ENCODE measurements at regions of chr1 and their contacts with region 1.

Region 1: GRCh38 chr1:40032240-40032891 is 8.2 kb upstream of the CAP1 start:
- DNase-seq: peak; percentile 40 to 57
- ATAC-seq: peak; percentile 73 to 85; a peak in 4 of 6 replicates
- H3K4me3 ChIP-seq: no peak overlapping the region
- H3K27ac ChIP-seq: no peak overlapping the region
- H3K4me1 ChIP-seq: no peaks in the 10 kb centered on the region
- CTCF ChIP-seq: peak; percentile 67
- EP300 ChIP-seq: no peak
- POLR2A ChIP-seq: no peak
- RAD21 ChIP-seq: peak; percentile 52 to 58

Region 2: GRCh38 chr1:39816415-39817090 is 215.8 kb before region 1 on chr1:
- CTCF ChIA-PET with region 1: interaction called, 12 read pairs
- POLR2A ChIA-PET with region 1: no interaction called
- DNase-seq: peak; percentile 44 to 68
- ATAC-seq: peak; percentile 88 to 90
- H3K4me3 ChIP-seq: no peak overlapping the region
- H3K27ac ChIP-seq: no peak overlapping the region
- H3K4me1 ChIP-seq: 0 out of 3 replicates have a peak, but pooled peaks cover 9% of the 10 kb centered on the region
- CTCF ChIP-seq: peak; percentile 64
- EP300 ChIP-seq: no peak
- POLR2A ChIP-seq: no peak
- RAD21 ChIP-seq: peak; percentile 64 to 71

Region 3: GRCh38 chr1:39981957-39982356 is 50.4 kb before region 1 on chr1:
- CTCF ChIA-PET with region 1: interaction called, 13 read pairs
- POLR2A ChIA-PET with region 1: no interaction called
- DNase-seq: peak in 1 of 2 experiments; percentile 26
- ATAC-seq: peak in 1 of 2 experiments; percentile 59; a peak in 3 of 6 replicates
- H3K4me3 ChIP-seq: no peak overlapping the region
- H3K27ac ChIP-seq: no peak overlapping the region
- H3K4me1 ChIP-seq: peaks cover 3% of the 10 kb centered on the region; the same call in 1 of the 3 replicates
- CTCF ChIP-seq: no peak
- EP300 ChIP-seq: no peak
- POLR2A ChIP-seq: no peak
- RAD21 ChIP-seq: no peak

Region 4: GRCh38 chr1:40017951-40018575 is 14.3 kb before region 1 on chr1:
- CTCF ChIA-PET with region 1: interaction called, 14 read pairs
- POLR2A ChIA-PET with region 1: no interaction called
- DNase-seq: peak in 1 of 2 experiments; percentile 8
- ATAC-seq: no peak; a peak in 1 of 6 replicates
- H3K4me3 ChIP-seq: no peak overlapping the region
- H3K27ac ChIP-seq: no peak overlapping the region
- H3K4me1 ChIP-seq: 0 out of 3 replicates have a peak, but pooled peaks cover 7% of the 10 kb centered on the region
- CTCF ChIP-seq: no peak
- EP300 ChIP-seq: no peak
- POLR2A ChIP-seq: no peak
- RAD21 ChIP-seq: no peak

Region 5: DNA sequence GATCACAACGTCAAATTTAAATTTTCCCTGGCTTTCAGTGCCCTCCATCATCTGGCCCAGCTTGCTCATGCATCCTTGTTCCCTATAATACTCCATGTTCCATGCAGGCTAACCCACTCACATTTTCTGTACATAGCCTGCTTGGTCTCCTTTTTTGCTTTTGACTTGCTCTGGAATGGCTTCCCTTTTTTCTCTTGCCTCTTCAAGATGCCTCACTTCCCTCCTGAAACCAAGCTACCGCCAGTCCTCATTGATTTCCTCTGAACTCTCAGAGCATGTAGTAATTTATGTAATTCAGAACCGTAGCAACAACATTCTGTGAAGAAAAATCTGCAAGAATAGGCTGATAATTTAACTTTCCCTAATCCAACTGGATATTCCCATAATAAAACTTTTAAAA is 18.5 kb after region 1 on chr1:
- CTCF ChIA-PET with region 1: no interaction called
- POLR2A ChIA-PET with region 1: no interaction called
- DNase-seq: no peak
- ATAC-seq: no peak
- H3K4me3 ChIP-seq: no peak overlapping the region
- H3K27ac ChIP-seq: no peak overlapping the region
- H3K4me1 ChIP-seq: 0 out of 3 replicates have a peak, but pooled peaks cover 7% of the 10 kb centered on the region
- CTCF ChIP-seq: no peak
- EP300 ChIP-seq: no peak
- POLR2A ChIP-seq: no peak
- RAD21 ChIP-seq: no peak

Region 6: DNA sequence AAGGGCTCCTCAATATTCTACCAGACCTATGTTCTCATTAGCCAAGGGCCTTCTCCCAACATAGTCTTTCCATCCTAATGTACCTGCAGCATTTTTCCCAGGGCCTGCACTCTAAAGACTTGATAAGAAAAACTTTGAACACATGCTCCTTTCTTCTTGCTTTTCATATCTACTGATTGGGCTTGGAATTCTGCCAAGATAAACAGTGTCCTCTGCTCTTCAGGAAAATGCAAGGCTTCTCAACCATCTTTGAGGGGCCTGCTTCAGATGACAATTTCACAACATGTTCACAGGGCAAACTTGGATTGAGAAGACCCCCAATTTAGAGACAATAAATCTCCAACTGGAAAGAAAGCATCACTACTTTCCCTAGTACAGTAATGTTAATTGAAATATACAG is 90.5 kb after region 1 on chr1:
- CTCF ChIA-PET with region 1: no interaction called
- POLR2A ChIA-PET with region 1: no interaction called
- DNase-seq: no peak
- ATAC-seq: no peak
- H3K4me3 ChIP-seq: no peak overlapping the region
- H3K27ac ChIP-seq: no peak overlapping the region
- H3K4me1 ChIP-seq: no peaks in the 10 kb centered on the region
- CTCF ChIP-seq: no peak
- EP300 ChIP-seq: no peak
- POLR2A ChIP-seq: no peak
- RAD21 ChIP-seq: no peak